Common myeloid progenitor, CD34-positive (primary cell): ENCODE measurements at regions of chr3 and their contacts with region 1.

Region 1: DNA sequence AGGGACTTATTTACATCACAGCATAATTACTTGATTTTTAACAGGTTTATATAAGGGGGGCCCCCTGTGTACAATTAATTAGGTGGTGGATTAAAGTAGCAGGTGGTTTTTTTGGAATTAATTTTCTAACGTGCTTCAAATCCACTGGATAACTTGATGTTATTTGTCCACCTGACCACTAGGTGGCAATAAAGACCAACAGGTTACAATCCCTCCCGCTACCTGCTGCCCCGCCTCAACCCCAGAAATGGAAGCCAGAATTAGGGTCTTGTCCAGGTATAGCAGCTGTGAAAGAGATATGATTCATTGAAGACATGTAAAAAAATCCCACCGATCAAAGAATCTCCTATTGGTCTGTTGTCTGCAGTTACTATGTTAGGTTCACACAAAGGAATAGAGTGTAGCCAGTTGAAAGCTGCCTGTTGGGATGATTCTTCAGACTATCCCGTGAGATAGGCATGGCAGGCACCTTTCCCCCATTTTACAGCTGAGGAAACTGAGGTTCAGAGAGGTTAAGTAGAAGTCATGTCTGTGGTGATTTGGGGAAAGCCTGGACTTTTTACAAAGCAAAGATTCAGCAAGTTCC is 44.0 kb downstream of the MFSD1 start:
- DNase-seq: peak; percentile 27 to 50 (median 48)
- H3K4me3 ChIP-seq: no peak overlapping the region
- H3K27ac ChIP-seq: no peak overlapping the region
- H3K4me1 ChIP-seq: no peaks in the 10 kb centered on the region
- H3K27me3 ChIP-seq: peaks cover 0 to 4% (median 0%) of the 10 kb centered on the region in 5 experiments

Region 2: DNA sequence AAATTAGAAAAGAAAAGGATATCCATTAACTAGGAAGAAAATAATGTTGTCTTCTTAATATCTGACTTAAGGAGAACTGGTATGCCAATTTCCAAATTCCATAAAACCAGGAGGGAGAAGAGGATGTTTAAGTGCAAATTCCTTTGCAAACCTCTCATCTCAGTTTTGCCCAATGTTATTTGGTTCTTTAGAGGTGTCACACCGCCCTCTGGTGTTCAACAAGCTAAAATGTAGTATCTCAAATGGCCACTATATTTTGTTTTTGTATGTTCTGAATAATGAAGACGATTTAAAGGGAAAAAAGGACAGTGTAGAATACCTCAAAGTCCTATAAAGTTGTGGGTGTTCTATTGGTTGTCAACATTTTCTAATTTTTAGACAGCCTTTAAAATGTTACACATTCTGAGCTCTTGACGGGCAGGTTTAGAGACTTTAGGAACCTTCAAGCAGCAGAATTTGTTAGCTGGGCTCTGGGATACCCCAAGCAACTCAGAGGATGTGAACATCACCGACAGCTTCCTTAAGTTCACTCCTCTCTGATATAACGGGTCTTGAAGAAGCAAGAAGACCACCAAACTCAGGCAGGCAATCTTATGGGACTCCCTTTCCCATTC is 414.3 kb after region 1 on chr3:
- CTCF ChIA-PET with region 1: interaction called, 36 read pairs
- POLR2A ChIA-PET with region 1: no interaction called
- DNase-seq: peak; percentile 60 to 83 (median 73)
- H3K4me3 ChIP-seq: no peak overlapping the region
- H3K27ac ChIP-seq: no peak overlapping the region
- H3K4me1 ChIP-seq: no peaks in the 10 kb centered on the region
- H3K27me3 ChIP-seq: peaks cover 0 to 9% (median 3%) of the 10 kb centered on the region in 5 experiments